ENCODE measurements at regions of chr17 and their contacts with region 1.

Region 1: GRCh38 chr17:29807520-29808351 is 122.3 kb downstream of the SSH2 start:
- DNase-seq: peak; percentile 67
- H3K4me3 ChIP-seq: no peak overlapping the region
- H3K27ac ChIP-seq: no peak overlapping the region
- H3K4me1 ChIP-seq: no peaks in the 10 kb centered on the region
- H3K27me3 ChIP-seq: no peaks in the 10 kb centered on the region
- CTCF ChIP-seq: peak; percentile 61 to 64
- POLR2A ChIP-seq: no peak

Region 2: GRCh38 chr17:29687596-29687995 is 120.1 kb before region 1 on chr17:
- CTCF ChIA-PET with region 1: no interaction called
- POLR2A ChIA-PET with region 1: no interaction called
- dilution Hi-C with region 1: no loop called
- intact Hi-C with region 1: no loop called
- DNase-seq: peak; percentile 29
- H3K4me3 ChIP-seq: no peak overlapping the region
- H3K27ac ChIP-seq: no peak overlapping the region
- H3K4me1 ChIP-seq: peaks cover 25% of the 10 kb centered on the region
- H3K27me3 ChIP-seq: no peaks in the 10 kb centered on the region
- CTCF ChIP-seq: no peak
- POLR2A ChIP-seq: no peak

Region 3: GRCh38 chr17:29789196-29790170 is 18.3 kb before region 1 on chr17:
- CTCF ChIA-PET with region 1: interaction called, 10 read pairs
- POLR2A ChIA-PET with region 1: no interaction called
- dilution Hi-C with region 1: no loop called
- intact Hi-C with region 1: no loop called
- DNase-seq: no peak
- H3K4me3 ChIP-seq: no peak overlapping the region
- H3K27ac ChIP-seq: no peak overlapping the region
- H3K4me1 ChIP-seq: peaks cover 4% of the 10 kb centered on the region
- H3K27me3 ChIP-seq: no peaks in the 10 kb centered on the region
- CTCF ChIP-seq: no peak
- POLR2A ChIP-seq: no peak

Region 4: GRCh38 chr17:29821897-29822296 is 14.2 kb after region 1 on chr17:
- CTCF ChIA-PET with region 1: interaction called, 14 read pairs
- POLR2A ChIA-PET with region 1: no interaction called
- dilution Hi-C with region 1: no loop called
- intact Hi-C with region 1: no loop called
- DNase-seq: no peak
- H3K4me3 ChIP-seq: no peak overlapping the region
- H3K27ac ChIP-seq: no peak overlapping the region
- H3K4me1 ChIP-seq: no peaks in the 10 kb centered on the region
- H3K27me3 ChIP-seq: no peaks in the 10 kb centered on the region
- CTCF ChIP-seq: no peak
- POLR2A ChIP-seq: no peak

Region 5: GRCh38 chr17:29838961-29839360 is 31.2 kb after region 1 on chr17:
- CTCF ChIA-PET with region 1: no interaction called
- POLR2A ChIA-PET with region 1: no interaction called
- dilution Hi-C with region 1: no loop called
- intact Hi-C with region 1: no loop called
- DNase-seq: no peak
- H3K4me3 ChIP-seq: no peak overlapping the region
- H3K27ac ChIP-seq: no peak overlapping the region
- H3K4me1 ChIP-seq: peaks cover 7% of the 10 kb centered on the region
- H3K27me3 ChIP-seq: no peaks in the 10 kb centered on the region
- CTCF ChIP-seq: no peak
- POLR2A ChIP-seq: no peak

Region 6: DNA sequence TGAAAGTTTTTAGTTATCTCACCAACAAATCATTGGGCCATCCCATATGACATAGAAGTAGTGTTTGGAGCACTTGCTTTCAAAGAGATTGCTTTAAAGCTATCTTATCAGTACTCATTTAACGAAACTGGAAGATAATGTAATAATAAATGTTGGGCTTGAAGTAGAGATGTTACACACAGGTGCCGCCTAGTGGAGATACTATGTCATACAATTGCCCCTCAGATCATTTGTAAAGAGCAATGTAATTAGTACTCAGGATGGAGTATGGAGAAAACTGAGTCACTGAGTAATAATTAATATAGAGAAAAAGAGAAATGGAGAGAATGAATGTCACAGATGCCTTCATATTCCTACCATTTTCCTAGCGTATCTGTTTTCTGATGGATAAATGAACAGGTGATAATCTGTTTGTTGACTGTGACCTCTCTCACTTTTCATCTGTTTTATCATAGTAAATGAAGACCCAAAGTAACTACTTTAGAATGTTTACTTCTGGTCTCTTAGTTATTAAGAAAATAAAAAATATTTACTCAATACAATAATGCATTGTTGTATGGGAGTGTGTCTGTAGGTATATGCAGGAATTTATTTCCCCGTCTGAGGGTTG is 214.1 kb after region 1 on chr17:
- CTCF ChIA-PET with region 1: interaction called, 84 read pairs
- POLR2A ChIA-PET with region 1: no interaction called
- dilution Hi-C with region 1: no loop called
- intact Hi-C with region 1: no loop called
- DNase-seq: peak; percentile 71
- H3K4me3 ChIP-seq: no peak overlapping the region
- H3K27ac ChIP-seq: no peak overlapping the region
- H3K4me1 ChIP-seq: peaks cover 2% of the 10 kb centered on the region
- H3K27me3 ChIP-seq: no peaks in the 10 kb centered on the region
- CTCF ChIP-seq: peak; percentile 58 to 59
- POLR2A ChIP-seq: no peak

Measured in endothelial cell of umbilical vein (primary cell).